Naive thymus-derived CD8-positive, alpha-beta T cell (primary cell): ENCODE measurements at regions of chr6 and their contacts with region 1.

Region 1: DNA sequence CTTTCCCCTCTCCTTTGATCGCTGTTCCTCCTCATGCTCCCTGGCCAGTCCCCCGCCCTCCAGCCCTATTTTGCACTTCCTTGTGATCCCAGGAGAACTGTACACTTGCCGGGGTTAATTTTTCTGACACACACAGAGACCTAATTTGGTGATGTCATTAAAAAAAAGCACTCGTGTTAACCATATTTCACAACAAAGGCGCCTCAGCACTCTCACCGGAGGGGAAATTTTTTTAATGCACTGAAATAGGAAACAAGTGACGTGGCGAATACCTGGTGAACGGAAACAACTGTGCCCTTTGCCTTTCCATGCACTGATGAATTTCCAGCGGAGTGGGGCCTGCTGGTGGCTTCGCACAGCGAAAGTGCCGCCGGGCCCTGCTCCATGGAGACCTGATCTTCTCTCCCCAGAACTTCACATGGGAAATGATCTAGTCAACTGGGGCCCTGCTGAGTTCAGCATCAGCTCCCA is 53.9 kb upstream of the TAGAP start:
- DNase-seq: peak; percentile 50 to 87 (median 73)
- ATAC-seq: peak; percentile 78 to 79
- H3K4me3 Mint-ChIP-seq: peak overlapping the region; percentile 67 to 88 (median 80)
- H3K27ac Mint-ChIP-seq: peak overlapping the region; percentile 87 to 97 (median 95)
- H3K4me1 Mint-ChIP-seq: peaks cover 38 to 88% (median 72%) of the 10 kb centered on the region in 4 donors
- H3K27me3 Mint-ChIP-seq: no peaks in the 10 kb centered on the region

Region 2: DNA sequence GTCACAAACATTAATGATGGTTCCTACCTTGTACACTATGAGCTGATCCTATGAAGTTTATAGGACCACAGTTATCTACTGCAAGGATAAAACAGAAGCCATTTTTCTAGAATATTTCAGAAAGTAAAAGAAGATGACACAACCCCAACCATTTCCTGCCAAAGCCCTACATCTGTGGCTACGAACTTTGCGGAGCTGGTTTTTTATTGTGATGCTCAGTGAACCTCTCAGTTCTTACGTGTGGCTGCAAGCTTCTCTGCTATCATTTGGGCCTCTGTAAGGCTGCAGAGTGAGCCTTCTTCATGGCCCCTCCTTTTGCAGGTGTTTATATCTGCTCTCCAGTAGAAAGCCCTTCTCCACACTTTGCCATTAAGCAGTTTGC is 36.1 kb before region 1 on chr6:
- POLR2A ChIA-PET with region 1: interaction called, 39 read pairs
- DNase-seq: peak in 9 of 10 donors; percentile 51 to 89 (median 80)
- ATAC-seq: peak; percentile 93 to 94
- H3K4me3 Mint-ChIP-seq: peak overlapping the region; percentile 56 to 84 (median 75)
- H3K27ac Mint-ChIP-seq: peak overlapping the region; percentile 96 to 99 (median 97)
- H3K4me1 Mint-ChIP-seq: peaks cover 43 to 96% (median 85%) of the 10 kb centered on the region in 4 donors
- H3K27me3 Mint-ChIP-seq: no peaks in the 10 kb centered on the region